Heart left ventricle (tissue), 16 donors: ENCODE measurements at regions of chr2 and their contacts with region 1.

Region 1: DNA sequence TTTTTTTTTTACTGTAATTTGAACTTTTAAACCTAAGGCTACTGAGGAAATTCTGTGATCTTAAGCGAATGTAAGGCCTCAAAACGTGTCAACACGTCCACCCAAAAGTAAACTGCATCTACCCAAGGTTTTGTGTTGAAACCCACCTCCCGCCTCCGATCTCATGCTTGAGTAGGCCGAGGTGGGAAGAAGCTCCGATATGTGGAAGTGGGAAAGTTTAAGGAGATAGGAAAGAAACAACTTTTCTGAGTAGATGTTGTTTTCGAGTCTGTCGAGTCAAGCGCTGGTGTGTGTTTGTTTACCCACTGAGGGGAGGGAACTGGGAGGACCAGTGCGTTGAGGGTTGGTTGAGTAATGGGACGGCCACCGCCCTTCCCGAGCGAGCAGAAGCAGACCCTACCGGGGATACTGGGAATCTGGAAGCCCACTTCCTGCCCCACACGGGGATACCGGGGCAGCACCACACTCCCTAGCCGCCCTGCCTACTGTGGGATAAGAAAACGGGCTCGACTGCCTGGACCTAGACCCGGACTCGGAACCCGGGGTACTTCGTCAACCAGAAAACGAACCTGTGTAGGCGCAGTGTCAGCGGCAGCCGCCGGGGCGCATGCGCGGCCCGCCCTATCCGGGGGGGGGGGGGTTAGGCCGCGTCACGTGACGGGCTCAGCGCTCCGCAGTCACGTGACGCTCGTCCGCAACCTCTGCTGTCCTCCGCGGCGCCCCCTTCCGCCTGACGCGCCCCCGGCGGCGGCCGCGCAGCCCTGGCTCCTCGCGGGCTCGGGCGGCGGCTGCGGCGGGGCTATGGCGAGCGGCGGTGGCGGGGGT is at the start of gene RETREG2:
- DNase-seq: peak; percentile 86 to 93 (median 89)
- ATAC-seq: peak; percentile 71 to 86 (median 78)
- H3K4me3 ChIP-seq: peak within 1 kb of the TSS; percentile 58 to 99 (median 92)
- H3K27ac ChIP-seq: peak within 1 kb of the TSS; percentile 96 to 100 (median 98)
- H3K4me1 ChIP-seq: peaks cover 5 to 54% (median 27%) of the 10 kb centered on the region in 12 donors
- H3K27me3 ChIP-seq: no peaks in the 10 kb centered on the region
- CTCF ChIP-seq: peak in 10 of 12 donors; percentile 11 to 67 (median 50)
- POLR2A ChIP-seq: peak; percentile 33 to 94
- total RNA-seq, gene RETREG2: 28.3 to 55.8 (median 38.2) TPM

Region 2: DNA sequence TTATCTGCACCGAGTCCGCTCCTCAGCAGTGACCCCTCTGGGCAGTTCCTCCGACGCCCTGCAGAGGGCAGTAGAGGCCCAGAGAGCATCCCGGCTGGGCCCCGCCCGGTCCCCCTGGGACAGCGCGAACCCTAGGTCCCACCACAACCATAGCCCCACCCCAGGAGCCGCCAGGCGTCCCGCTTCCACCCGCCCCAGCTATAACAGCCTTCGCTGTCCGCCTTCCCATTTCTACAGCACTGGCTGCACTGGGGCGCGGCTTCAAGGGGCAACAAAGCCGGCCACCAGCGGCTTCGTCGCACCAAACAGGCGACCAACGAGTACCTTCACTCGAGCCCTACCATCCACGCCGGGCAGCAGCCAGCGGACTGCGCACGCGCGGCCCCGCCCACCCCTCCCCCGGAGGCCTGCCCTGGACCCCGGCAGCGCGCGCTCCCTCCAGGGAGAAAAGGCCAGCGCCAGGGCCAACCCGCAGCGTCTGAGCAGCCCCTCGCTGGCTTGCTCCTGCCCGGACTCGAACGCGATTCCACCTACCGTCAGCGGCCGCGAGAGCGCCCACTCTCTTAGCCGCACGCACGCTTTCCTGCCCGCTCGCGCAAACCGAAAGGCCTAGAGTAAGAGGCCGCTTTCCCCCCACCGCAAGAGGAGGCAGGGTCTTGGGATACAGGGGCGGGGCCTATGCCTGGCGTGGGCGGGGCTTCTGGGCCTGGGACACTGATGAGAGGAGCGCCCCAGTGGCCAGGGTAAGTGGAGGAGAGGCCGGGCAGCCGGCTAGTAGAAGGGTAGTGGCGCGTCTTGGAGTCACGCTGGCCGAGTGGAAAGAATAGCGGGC is 17.4 kb before region 1 on chr2 and contains the start of gene NHEJ1:
- intact Hi-C with region 1: loop called in 2 of 10 experiments (anchors 1 to 2 kb)
- DNase-seq: peak; percentile 95 to 98 (median 96)
- ATAC-seq: peak; percentile 96 to 98 (median 98)
- H3K4me3 ChIP-seq: peak within 1 kb of the TSS; percentile 42 to 88 (median 68)
- H3K27ac ChIP-seq: peak within 1 kb of the TSS; percentile 88 to 99 (median 95)
- H3K4me1 ChIP-seq: peaks cover 0 to 15% (median 10%) of the 10 kb centered on the region in 12 donors
- H3K27me3 ChIP-seq: no peaks in the 10 kb centered on the region
- CTCF ChIP-seq: peak; percentile 98 to 100 (median 99)
- POLR2A ChIP-seq: peak in 1 of 2 donors; percentile 64
- total RNA-seq, gene NHEJ1: 4.6 to 13.2 (median 8.0) TPM

Region 3: DNA sequence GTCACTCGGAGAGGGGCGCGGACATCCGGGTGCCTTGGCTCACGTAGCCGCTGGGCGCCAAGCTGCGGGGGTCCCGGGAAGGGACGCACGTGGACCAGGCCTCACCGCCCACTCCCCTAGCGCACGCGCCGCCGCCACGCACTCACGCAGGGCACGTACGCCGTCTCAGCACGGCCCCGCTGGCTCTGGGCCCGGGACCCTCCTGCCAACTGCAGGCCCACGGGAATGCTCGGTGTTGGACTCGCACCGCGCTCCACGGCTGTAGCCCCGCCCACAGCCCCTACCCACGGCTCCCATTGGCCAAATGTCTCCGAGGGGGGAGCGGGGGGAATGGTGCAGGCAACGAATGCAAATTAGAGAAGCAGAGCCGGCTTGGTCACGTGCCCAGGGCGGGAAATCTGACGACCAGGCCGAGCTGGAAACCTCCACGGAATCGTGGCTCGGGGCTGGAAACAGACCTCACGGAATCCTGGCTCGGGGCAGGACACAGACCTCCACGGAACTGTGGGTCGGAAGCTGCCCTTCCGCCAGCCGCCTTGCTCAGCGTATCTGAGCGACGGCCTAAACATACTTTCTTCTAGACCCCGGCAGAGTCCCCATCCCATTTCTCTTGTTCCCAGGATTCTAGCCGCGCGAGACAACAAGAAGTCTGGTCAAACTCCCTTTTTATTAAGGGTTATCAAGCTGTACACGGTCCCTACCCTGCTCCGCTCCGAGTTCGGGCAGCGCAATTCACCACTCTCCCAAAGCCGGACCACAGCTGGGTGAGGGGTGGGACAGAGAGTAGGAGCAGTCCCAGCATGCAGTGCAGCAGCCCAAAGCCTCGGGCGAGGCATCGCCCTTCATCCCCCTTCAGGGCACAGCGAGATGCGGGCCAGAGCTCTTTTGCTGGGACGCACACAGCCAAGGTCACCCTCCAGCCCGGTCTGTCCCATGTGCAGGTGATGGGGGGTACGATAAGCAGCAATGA is 41.3 kb after region 1 on chr2 and contains the start of gene ABCB6:
- intact Hi-C with region 1: loop called in 4 of 10 experiments (anchors 5 to 10 kb)
- DNase-seq: peak; percentile 97 to 99 (median 98)
- ATAC-seq: peak; percentile 86 to 93 (median 90)
- H3K4me3 ChIP-seq: peak within 1 kb of the TSS; percentile 19 to 66 (median 58)
- H3K27ac ChIP-seq: peak within 1 kb of the TSS; percentile 68 to 97 (median 90)
- H3K4me1 ChIP-seq: peaks cover 6 to 42% (median 33%) of the 10 kb centered on the region in 12 donors
- H3K27me3 ChIP-seq: no peaks in the 10 kb centered on the region
- CTCF ChIP-seq: no peak
- POLR2A ChIP-seq: peak; percentile 7 to 84
- total RNA-seq, gene ABCB6: 12.1 to 28.1 (median 17.9) TPM

Region 4: DNA sequence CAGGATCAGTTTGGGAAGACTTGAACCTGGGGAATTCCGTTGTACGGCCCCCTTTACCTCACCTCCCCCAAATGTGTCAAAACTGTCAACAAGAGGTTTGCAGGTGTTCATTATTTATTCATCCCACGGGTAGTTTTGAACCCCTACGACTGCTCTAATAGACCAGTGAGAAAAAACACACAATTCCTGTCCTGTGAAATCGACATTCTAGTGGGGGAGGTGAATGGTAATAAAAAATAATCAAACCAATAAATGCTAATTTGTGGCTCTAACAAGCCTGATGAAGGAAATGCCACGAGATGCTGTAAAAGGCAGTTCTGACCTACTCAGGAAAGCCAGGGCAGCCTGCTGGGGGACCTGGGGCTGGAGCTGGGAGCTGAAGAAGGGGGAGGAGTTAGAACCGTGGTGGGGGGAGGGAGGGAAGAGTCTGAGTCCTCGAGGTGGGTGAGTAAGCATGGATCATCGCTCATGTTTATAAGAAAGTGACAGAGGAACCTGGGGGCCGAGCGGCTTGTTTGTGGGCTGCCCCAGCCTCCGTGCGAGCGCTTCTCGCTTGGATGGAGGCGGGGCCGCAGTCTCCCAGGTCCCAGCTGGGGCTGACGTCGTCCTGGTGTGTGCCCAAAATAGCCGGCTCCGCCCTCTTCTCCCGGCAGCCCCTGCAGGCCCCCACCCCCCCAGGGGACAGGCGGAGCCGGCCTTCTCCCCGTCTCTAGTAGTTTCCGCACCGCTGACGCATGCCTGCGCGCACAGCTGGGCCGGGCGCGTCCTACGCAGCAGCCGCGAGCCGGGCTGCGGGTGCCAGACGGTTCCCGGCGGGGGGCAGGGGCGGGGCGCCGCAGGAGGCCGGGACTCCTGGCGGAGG is 101.1 kb after region 1 on chr2 and contains the start of gene DNAJB2:
- intact Hi-C with region 1: loop called in 5 of 10 experiments (anchors 2 to 5 kb)
- DNase-seq: peak; percentile 99 to 100 (median 99)
- ATAC-seq: peak; percentile 95 to 97 (median 97)
- H3K4me3 ChIP-seq: peak within 1 kb of the TSS; percentile 60 to 97 (median 82)
- H3K27ac ChIP-seq: peak within 1 kb of the TSS; percentile 91 to 100 (median 99)
- H3K4me1 ChIP-seq: peaks cover 7 to 48% (median 29%) of the 10 kb centered on the region in 12 donors
- H3K27me3 ChIP-seq: no peaks in the 10 kb centered on the region
- CTCF ChIP-seq: no peak
- POLR2A ChIP-seq: peak in 1 of 2 donors; percentile 95
- total RNA-seq, gene DNAJB2: 61.3 to 95.4 (median 74.9) TPM

Region 5: GRCh38 chr2:219388127-219388844 is 210.5 kb after region 1 on chr2:
- intact Hi-C with region 1: loop called in 3 of 10 experiments (anchors 10 kb)
- DNase-seq: peak; percentile 99 to 100 (median 99)
- ATAC-seq: peak; percentile 83 to 92 (median 88)
- H3K4me3 ChIP-seq: peak overlapping the region in 10 of 12 donors; percentile 20 to 95 (median 78)
- H3K27ac ChIP-seq: peak overlapping the region; percentile 77 to 99 (median 89)
- H3K4me1 ChIP-seq: peaks cover 0 to 19% (median 11%) of the 10 kb centered on the region in 12 donors
- H3K27me3 ChIP-seq: no peaks in the 10 kb centered on the region
- CTCF ChIP-seq: peak; percentile 40 to 87 (median 74)
- POLR2A ChIP-seq: peak in 1 of 2 donors; percentile 40